ENCODE measurements at regions of chr7 and their contacts with region 1.

Region 1: DNA sequence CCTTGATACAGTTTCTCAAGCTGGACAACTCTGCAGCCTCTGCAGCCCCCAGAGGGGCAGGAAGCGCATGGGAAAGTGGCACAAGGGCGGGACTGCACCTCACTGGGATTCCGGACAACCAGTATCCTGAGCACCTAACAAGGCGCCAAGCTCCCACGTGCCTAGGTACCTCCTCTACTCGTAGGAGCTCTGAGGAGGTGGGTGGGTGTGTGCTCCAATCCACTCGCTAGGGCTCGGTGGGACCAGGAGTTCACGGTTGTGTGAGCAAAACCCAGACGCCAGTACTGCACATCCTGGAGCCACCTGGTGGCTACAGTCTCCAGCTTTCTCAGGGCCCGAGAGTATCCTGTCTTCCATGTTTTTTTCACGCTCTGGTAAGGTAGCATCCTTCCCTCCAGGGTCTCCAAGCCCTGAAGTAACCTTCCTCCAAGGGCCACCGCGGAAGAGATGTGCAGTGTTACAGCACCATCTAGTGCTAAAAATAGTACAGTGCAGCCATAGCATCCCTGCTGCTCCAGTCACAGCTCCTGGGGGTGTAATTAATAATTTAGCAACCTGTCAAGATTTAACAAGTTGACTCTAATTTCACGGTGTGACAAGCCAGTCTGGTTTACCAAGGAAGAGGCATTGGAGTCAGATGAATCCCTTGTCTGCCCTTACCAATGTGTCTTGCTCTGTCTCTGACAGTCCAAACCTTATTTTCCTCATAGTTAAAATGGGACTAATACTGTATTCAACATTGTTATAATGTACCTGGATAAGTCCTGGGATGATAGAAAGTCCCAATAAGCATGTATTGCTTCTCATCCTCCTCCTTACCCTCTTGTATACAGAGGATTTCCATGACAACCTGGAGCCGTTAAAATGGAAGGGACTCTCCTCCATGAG is 70.4 kb downstream of the HERPUD2 start:
- DNase-seq: peak in 4 of 5 donors; percentile 12 to 51 (median 30)
- H3K4me3 ChIP-seq: no peak overlapping the region
- H3K4me3 Mint-ChIP-seq: no peak overlapping the region
- H3K27ac ChIP-seq: no peak overlapping the region
- H3K27ac Mint-ChIP-seq: peak overlapping the region in 2 of 8 donors; percentile 58 to 71
- H3K4me1 ChIP-seq: no peaks in the 10 kb centered on the region
- H3K4me1 Mint-ChIP-seq: peaks cover 2 to 9% (median 5%) of the 10 kb centered on the region in 3 donors
- H3K27me3 ChIP-seq: no peaks in the 10 kb centered on the region
- H3K27me3 Mint-ChIP-seq: peaks cover 0 to 2% of the 10 kb centered on the region in 2 donors

Region 2: GRCh38 chr7:35647171-35647574 is 22.6 kb after region 1 on chr7:
- CTCF ChIA-PET with region 1: interaction called, 21 read pairs
- POLR2A ChIA-PET with region 1: no interaction called
- DNase-seq: no peak
- H3K4me3 ChIP-seq: no peak overlapping the region
- H3K4me3 Mint-ChIP-seq: peak overlapping the region in 5 of 7 donors; percentile 4 to 61 (median 25)
- H3K27ac ChIP-seq: no peak overlapping the region
- H3K27ac Mint-ChIP-seq: peak overlapping the region; percentile 6 to 80 (median 50)
- H3K4me1 ChIP-seq: peaks cover 45% of the 10 kb centered on the region
- H3K4me1 Mint-ChIP-seq: peaks cover 76 to 95% (median 94%) of the 10 kb centered on the region in 3 donors
- H3K27me3 ChIP-seq: no peaks in the 10 kb centered on the region
- H3K27me3 Mint-ChIP-seq: no peaks in the 10 kb centered on the region

Region 3: DNA sequence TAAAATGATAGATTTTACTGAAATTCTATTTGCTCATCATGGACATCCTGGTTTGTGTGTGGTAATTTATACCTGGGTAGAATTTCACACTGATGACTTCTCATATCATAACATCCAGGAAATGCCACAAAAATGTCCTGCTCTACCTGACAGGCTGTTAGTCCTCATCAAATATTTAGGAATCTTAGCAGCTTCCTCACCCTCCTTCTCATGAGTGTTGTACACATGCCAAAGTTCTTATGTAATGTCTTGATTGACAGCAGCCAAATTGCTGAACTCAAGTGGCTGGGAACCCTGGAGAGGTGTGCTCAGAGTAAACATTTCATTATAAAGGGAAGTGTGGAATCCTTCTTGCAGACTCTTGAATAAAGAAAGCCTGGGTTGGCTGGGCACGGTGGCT is 537.4 kb after region 1 on chr7:
- CTCF ChIA-PET with region 1: no interaction called
- POLR2A ChIA-PET with region 1: interaction called, 11 read pairs
- DNase-seq: no peak
- H3K4me3 ChIP-seq: no peak overlapping the region
- H3K4me3 Mint-ChIP-seq: no peak overlapping the region
- H3K27ac ChIP-seq: no peak overlapping the region
- H3K27ac Mint-ChIP-seq: no peak overlapping the region
- H3K4me1 ChIP-seq: no peaks in the 10 kb centered on the region
- H3K4me1 Mint-ChIP-seq: peaks cover 0 to 29% (median 0%) of the 10 kb centered on the region in 3 donors
- H3K27me3 ChIP-seq: no peaks in the 10 kb centered on the region
- H3K27me3 Mint-ChIP-seq: peaks cover 0 to 2% of the 10 kb centered on the region in 2 donors